Mammary epithelial cell (primary cell): ENCODE measurements at regions of chr12 and their contacts with region 1.

Region 1: DNA sequence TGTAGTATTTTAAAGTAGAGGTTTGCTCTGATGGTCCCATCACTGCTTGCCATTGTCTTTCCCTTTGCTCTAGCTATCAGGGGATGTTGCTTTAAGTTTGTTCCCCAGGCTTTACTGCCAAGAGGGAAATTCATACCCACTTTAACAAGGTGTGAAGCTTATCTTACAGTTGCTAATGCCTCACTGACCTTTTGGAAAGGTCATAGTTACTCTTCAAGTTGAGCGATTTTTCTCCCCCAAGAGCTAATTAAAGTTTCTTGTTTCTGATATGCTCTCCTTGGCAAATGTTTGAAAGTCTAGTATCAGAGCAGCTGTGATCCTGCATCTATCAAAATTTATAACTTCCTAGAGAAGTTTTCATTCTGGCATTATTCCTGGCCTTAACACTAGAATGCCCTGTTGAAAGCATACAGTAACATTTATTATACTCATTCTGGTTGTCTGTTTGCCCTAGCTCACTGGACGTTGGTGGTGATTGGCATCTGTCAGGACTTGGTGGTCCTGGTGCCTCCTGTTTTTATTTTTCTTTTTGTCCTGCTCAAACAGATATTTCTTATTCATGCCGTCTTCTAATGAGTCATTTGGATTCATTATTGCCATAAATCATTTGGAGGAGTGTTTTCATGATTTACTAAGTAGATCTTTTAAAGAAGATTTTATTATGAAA is 8.1 kb downstream of the ATP2A2 start:
- DNase-seq: no peak
- H3K4me3 ChIP-seq: no peak overlapping the region
- H3K27ac ChIP-seq: peak overlapping the region; percentile 30
- H3K4me1 ChIP-seq: peaks cover 39% of the 10 kb centered on the region
- H3K27me3 ChIP-seq: no peaks in the 10 kb centered on the region
- CTCF ChIP-seq: no peak

Region 2: DNA sequence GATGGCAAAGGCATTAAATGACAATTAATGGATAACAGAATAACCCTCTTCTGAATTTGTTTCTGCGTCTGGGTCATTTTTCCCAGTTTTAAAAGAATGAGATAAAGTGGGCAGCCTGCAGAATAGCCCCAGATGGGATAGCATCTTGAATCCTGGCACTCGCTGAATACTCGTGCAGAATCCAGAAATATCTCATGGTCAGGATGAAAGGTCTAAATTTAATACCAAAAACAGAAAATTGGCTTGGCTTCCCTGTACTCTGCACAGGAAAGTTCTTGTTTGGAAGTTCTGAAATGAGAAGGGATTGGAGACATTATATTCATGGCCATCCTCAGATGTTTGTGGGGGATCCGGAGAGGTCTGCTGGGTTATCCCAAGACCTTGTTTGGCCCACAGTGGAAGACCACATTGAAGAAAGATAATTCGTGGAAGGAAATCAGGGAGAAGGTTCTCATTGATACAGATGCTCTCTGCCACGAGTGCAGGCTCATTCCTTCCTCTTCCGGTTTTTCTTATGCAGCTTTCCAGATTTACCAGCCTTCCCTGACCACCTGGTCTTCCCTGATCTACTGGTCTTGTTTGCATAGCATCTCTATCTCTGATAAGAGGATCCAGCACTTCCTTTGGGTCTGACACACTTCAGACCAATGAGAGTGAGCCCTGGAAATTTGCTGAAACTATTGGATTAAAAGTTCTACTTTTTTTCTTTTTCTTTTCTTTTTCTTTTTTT is 171.1 kb before region 1 on chr12:
- CTCF ChIA-PET with region 1: no interaction called
- dilution Hi-C with region 1: loop called (anchors 5 kb)
- in situ Hi-C with region 1: no loop called
- intact Hi-C with region 1: loop called (anchors 5 kb)
- DNase-seq: no peak
- H3K4me3 ChIP-seq: no peak overlapping the region
- H3K27ac ChIP-seq: no peak overlapping the region
- H3K4me1 ChIP-seq: no peaks in the 10 kb centered on the region
- H3K27me3 ChIP-seq: no peaks in the 10 kb centered on the region
- CTCF ChIP-seq: no peak

Region 3: DNA sequence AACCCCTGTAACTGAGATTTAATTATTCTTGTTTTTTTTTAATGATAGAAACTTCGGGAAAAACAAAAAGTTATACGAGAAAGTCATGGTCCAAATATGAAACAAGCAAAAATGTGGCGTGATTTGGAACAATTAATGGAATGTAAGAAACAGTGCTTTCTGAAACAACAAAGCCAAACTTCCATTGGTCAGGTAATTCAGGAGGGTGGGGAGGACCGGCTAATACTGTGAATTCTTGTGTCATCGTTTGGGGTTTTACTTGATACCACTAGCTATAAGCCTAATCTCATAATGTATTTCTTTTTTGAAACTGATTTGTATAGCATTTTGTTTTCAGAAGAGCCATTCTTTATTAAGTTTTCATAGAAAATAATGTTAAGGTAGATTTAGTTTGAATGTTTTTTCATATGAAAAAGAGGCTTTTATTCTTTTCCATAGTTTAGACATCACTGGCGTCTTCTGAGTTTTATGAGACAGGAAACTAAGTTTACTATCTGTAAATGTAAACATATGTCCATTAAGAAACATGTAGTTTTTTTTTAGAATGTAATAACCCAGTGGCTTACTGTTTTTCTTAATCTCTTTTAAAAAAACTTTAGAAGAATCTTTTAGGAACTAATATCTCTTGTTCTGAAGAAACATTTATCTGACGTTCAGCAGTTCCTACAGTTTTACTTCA is 71.0 kb before region 1 on chr12:
- CTCF ChIA-PET with region 1: no interaction called
- dilution Hi-C with region 1: loop called (anchors 5 kb)
- in situ Hi-C with region 1: no loop called
- intact Hi-C with region 1: no loop called
- DNase-seq: no peak
- H3K4me3 ChIP-seq: no peak overlapping the region
- H3K27ac ChIP-seq: no peak overlapping the region
- H3K4me1 ChIP-seq: peaks cover 2% of the 10 kb centered on the region
- H3K27me3 ChIP-seq: no peaks in the 10 kb centered on the region
- CTCF ChIP-seq: no peak

Region 4: DNA sequence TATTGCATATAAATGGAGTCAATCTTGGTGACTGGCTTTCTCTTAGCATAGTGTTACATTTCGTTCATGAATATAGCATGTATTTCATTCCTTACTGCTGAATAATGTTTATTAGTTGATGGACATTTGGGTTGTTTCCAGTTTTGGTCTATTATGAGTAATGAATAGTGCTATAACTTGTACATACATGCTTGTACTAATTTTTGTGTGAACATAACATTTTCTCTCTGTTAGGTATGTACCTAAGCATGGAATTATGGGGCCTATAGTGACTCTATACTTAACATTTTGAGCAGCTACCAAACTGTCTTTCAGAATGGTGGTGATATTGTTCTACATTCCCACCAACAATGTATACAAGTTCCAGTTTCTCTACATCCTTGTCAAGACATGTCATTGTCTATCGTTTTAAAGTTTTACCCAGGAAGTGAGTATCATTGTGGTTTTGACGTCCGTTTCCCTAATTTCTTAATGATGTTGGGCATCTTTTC is 14.9 kb after region 1 on chr12:
- CTCF ChIA-PET with region 1: no interaction called
- dilution Hi-C with region 1: no loop called
- in situ Hi-C with region 1: no loop called
- intact Hi-C with region 1: no loop called
- DNase-seq: peak; percentile 93
- H3K4me3 ChIP-seq: no peak overlapping the region
- H3K27ac ChIP-seq: peak overlapping the region; percentile 85
- H3K4me1 ChIP-seq: peaks cover 49% of the 10 kb centered on the region
- H3K27me3 ChIP-seq: no peaks in the 10 kb centered on the region
- CTCF ChIP-seq: no peak

Region 5: DNA sequence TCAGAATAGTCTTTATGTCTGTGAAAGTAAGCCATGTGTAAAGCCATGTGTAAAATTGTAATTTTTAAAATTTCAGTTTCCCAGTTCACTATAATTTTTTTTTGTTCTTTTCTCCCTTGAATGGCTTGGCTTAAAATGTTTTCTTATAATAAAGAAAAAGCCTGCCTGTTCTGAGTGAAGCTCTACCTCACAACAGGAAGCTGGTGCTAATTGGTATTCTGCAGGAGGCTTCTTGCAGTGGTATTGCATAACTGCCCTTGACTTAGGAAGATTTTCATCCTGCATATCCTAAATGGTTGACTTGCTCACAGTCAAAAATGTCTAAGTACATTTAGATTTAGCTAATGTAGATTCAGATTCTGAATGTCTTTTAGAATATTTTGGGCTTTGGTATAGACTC is 41.4 kb after region 1 on chr12:
- CTCF ChIA-PET with region 1: no interaction called
- dilution Hi-C with region 1: loop called (anchors 5 kb)
- in situ Hi-C with region 1: no loop called
- intact Hi-C with region 1: loop called (anchors 5 kb)
- DNase-seq: peak; percentile 30
- H3K4me3 ChIP-seq: no peak overlapping the region
- H3K27ac ChIP-seq: no peak overlapping the region
- H3K4me1 ChIP-seq: peaks cover 6% of the 10 kb centered on the region
- H3K27me3 ChIP-seq: no peaks in the 10 kb centered on the region
- CTCF ChIP-seq: no peak